Cardiac septum (tissue), 1 donor: ENCODE measurements at regions of chr17 and their contacts with region 1.

Region 1: GRCh38 chr17:27892866-27893769 is at the start of gene LYRM9:
- DNase-seq: peak; percentile 97
- total RNA-seq, gene LYRM9: 8.8 TPM

Region 2: DNA sequence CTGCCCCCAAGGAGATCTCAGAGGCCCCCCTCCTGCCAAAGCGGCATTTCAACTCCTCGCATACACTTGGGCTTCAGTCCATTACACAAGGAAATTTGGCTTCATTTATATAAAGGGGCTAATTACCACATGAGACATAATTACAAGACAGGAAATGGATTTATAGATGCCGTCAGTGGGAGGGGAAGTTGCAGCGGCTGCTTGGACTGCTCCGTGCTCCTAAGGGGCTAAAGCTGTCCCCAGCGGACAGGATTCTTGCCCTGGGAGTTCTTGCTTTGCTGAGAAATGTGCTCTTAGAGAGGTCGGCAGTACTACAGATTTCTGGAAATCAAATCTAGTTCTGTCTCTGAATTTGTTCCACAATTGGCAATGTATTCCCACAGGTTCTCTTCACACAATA is 92.2 kb after region 1 on chr17:
- intact Hi-C with region 1: no loop called
- DNase-seq: no peak

Region 3: DNA sequence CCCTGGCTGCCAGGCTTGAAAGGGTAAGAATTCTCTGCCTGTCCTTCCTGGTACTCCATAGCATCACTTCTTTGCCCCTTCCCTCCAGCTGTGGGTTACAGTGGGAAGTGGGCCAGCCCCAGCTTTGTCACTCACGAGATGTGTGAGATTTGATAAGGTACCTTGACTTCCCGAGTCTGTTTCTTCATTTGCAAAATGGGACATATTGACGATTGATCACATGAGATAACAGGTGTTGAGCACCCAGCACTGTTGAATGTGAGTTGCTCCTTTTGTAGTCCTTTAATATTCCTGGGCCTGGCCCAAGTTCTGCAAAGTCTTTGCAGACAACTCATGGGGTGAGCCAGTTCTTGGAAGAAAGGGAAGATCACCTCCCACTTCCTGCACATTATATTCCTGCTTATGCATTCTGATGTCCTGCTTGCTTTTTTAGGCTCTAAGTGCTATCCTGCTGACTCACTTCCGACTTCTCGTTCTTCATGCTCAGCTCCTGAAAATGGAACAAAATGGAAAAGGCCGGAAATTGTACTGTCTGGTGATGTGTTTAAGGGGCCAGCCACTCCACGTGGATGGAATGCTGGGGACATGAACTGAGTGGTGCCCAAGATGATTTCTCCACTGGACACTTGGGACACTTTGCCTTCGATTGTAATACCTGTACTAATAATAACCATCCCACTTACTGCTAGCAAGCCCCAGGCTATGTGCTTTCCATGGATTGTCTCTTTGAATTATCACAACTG is 141.0 kb after region 1 on chr17:
- intact Hi-C with region 1: loop called (anchors 10 kb)
- DNase-seq: no peak

Region 4: DNA sequence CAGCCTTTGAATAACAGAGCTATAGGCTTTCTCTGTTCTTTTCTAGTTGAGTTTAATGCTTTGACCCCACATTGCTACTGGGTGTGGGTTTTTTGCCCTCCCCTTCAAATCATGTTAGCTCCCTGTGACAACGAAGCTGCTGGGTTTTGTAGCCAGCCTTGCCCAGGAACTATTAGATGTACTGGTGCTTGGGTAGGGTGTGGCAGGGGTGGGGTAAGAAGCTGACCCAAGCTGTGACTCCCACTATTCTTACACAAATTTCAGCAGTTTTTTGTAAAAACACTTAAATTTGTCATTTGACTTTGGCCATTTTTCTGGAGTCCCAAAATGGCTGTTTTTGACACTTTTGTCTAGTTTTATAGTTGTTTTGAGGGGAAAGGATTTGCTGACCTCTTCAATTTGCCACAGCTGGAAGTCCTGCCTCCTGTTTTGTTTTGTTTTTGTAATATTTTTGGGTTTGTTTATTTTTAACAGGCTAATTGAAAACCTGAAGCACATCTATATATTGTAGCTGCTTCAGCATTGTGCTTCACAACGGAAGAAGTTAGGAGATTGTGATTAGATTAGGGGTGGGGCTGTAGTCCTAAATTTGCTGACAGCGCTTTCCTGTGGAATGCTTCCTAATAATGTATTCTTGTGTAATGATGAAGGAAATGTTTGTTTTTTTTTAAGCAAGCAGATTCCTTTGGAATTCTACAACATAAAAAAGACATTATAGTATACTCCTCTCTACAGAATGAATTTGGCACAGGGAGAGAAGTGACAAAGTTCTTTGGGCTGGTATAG is 219.3 kb after region 1 on chr17:
- intact Hi-C with region 1: loop called (anchors 10 kb)
- DNase-seq: no peak

Region 5: GRCh38 chr17:28252436-28252835 is 359.3 kb after region 1 on chr17:
- intact Hi-C with region 1: loop called (anchors 10 kb)
- DNase-seq: no peak